ENCODE measurements at regions of chr17 and their contacts with region 1.

Region 1: DNA sequence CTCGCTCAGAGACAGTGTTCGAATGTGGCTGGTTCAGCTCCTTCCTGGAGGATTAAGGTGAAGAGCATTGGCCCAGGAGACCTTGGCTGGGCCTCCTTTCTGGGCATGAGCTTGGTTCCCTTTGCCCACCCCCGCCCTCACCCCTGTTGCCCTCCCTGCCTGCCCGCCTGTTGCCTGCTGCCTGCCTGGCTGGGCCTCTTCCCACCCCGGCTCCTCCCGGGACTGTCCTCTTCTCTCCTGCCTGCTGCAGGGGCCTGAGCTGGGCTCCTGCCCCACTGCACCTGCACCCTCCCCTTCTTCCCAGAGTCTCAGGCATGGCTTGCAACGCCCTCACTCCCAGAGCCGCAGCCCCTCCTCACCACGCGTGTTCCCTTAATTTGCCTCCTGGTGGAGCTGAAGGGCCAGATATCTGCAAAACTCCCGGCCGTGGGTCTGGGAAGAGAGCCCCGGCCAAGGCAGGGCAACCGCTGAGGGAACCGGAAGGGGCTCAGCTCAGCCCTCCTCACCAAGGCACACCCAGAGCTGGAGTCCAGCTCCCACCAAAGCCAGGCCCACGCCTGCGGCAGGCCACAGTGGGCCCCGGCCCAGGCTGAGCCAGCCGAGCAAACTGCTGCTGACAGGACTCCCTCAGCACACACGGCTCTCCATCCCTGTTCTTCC is 31.2 kb downstream of the MNT start:
- DNase-seq: no peak
- H3K4me3 ChIP-seq: no peak overlapping the region
- H3K27ac ChIP-seq: no peak overlapping the region
- H3K27me3 ChIP-seq: no peaks in the 10 kb centered on the region
- CTCF ChIP-seq: 0 out of 2 replicates have a peak, but pooled peaks have one; percentile 15

Region 2: DNA sequence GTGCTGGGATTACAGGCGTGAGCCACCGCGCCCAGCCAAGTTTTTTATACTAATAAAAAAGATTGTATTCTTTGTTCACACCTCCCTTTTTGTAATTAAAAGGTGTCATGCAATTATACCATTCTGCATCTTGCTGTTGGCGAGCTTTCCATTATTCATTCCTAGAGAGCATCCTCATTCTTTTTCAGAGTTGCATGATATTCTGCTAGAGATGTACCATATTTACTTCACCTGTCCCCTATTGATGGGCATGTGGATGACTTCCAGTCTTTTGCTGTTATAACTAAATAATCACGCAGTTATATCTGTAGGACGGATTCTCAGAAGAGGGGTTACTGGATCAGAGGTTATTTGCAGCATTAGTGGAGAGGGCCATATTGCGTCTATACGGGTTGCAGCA is 15.4 kb before region 1 on chr17:
- CTCF ChIA-PET with region 1: interaction called, 10 read pairs
- POLR2A ChIA-PET with region 1: no interaction called
- DNase-seq: no peak
- H3K4me3 ChIP-seq: no peak overlapping the region
- H3K27ac ChIP-seq: no peak overlapping the region
- H3K27me3 ChIP-seq: no peaks in the 10 kb centered on the region
- CTCF ChIP-seq: no peak

Measured in AG04450 (cell line).